ENCODE measurements at regions of chr13 and their contacts with region 1.

Region 1: GRCh38 chr13:51797664-51798488 is 6.1 kb downstream of the DHRS12 start:
- DNase-seq: no peak
- ATAC-seq: peak; percentile 67
- H3K4me3 ChIP-seq: no peak overlapping the region
- H3K27ac ChIP-seq: no peak overlapping the region
- H3K4me1 ChIP-seq: peaks cover 39% of the 10 kb centered on the region
- H3K27me3 ChIP-seq: no peaks in the 10 kb centered on the region
- CTCF ChIP-seq: peak; percentile 62 to 84 (median 69); a peak in 5 of 6 replicates
- EP300 ChIP-seq: no peak
- POLR2A ChIP-seq: no peak
- RAD21 ChIP-seq: peak; percentile 93

Region 2: DNA sequence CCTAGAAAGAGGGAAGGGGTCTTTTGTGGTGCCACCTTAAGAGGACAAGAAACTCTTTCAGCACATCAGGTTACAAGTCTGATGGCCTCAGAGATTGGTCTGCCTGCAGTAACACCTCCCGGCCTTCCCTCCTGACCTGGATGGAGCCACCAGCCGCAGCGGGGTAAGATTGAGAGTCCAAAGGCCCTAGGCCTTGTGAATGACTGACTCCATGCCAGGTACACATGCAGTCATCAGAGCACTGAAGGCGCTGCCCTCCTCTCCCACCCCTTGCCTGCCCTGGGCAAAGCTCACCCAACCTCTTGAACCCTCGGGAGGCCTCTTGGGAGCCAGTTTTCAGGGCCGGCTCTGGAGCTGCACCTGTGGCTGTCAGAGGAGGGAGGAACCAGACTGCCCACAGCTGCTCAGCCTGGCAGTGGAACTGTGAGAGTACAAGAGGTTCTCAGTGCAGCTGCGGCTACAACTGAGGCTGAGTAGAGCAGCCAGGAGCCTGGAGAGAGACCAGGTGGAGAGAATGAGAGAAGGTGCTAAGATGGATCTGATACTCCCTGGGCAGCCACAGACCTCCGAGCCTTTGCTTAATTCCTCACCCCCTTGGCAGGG is 663.0 kb before region 1 on chr13:
- CTCF ChIA-PET with region 1: interaction called, 12 read pairs
- POLR2A ChIA-PET with region 1: no interaction called
- RAD21 ChIA-PET with region 1: no interaction called
- SMC1A ChIA-PET with region 1: no interaction called
- in situ Hi-C with region 1: no loop called
- intact Hi-C with region 1: no loop called
- DNase-seq: no peak
- ATAC-seq: no peak
- H3K4me3 ChIP-seq: no peak overlapping the region
- H3K27ac ChIP-seq: no peak overlapping the region
- H3K4me1 ChIP-seq: no peaks in the 10 kb centered on the region
- H3K27me3 ChIP-seq: peaks cover 0 to 2% of the 10 kb centered on the region in 2 experiments; a peak in 2 of 4 replicates
- CTCF ChIP-seq: no peak
- EP300 ChIP-seq: no peak
- POLR2A ChIP-seq: no peak
- RAD21 ChIP-seq: no peak

Region 3: DNA sequence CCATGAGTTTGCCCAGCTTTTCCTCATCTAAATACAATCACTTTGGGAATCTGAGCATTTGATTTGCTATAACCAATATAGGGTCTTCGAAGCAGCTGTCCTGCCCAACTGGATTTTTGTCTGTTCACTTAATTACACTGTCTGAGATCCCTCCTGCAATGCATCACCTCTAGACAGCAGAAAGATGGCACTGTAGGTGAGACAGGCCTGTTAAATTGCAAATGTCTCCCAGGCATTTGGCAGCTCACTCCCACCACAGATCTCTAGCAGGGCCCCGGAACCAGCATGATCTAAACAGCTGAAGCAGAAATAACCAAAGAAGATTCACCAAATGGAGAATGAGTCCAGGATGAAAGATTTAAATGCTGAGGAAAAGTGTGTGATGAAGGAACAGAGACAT is 500.3 kb before region 1 on chr13:
- CTCF ChIA-PET with region 1: interaction called, 19 read pairs
- POLR2A ChIA-PET with region 1: no interaction called
- RAD21 ChIA-PET with region 1: interaction called, 19 read pairs
- SMC1A ChIA-PET with region 1: interaction called, 28 read pairs
- in situ Hi-C with region 1: no loop called
- intact Hi-C with region 1: no loop called
- DNase-seq: no peak
- ATAC-seq: peak; percentile 57; the same call in 2 of the 3 replicates
- H3K4me3 ChIP-seq: no peak overlapping the region
- H3K27ac ChIP-seq: no peak overlapping the region
- H3K4me1 ChIP-seq: no peaks in the 10 kb centered on the region
- H3K27me3 ChIP-seq: no peaks in the 10 kb centered on the region
- CTCF ChIP-seq: peak; percentile 7 to 24 (median 15); a peak in 1 of 6 replicates
- EP300 ChIP-seq: no peak
- POLR2A ChIP-seq: no peak
- RAD21 ChIP-seq: peak; percentile 41; the same call in 1 of the 2 replicates

Region 4: GRCh38 chr13:51420681-51421490 is 377.0 kb before region 1 on chr13:
- CTCF ChIA-PET with region 1: interaction called, 13 read pairs
- POLR2A ChIA-PET with region 1: interaction called, 3 read pairs
- RAD21 ChIA-PET with region 1: interaction called, 6 read pairs
- SMC1A ChIA-PET with region 1: interaction called, 9 read pairs
- in situ Hi-C with region 1: no loop called
- intact Hi-C with region 1: no loop called
- DNase-seq: no peak
- ATAC-seq: 0 out of 3 replicates have a peak, but pooled peaks have one; percentile 6
- H3K4me3 ChIP-seq: no peak overlapping the region
- H3K27ac ChIP-seq: peak overlapping the region; percentile 66
- H3K4me1 ChIP-seq: peaks cover 52% of the 10 kb centered on the region
- H3K27me3 ChIP-seq: no peaks in the 10 kb centered on the region
- CTCF ChIP-seq: no peak
- EP300 ChIP-seq: no peak
- POLR2A ChIP-seq: no peak
- RAD21 ChIP-seq: no peak

Region 5: GRCh38 chr13:51444922-51445321 is 353.0 kb before region 1 on chr13:
- CTCF ChIA-PET with region 1: interaction called, 35 read pairs
- POLR2A ChIA-PET with region 1: no interaction called
- RAD21 ChIA-PET with region 1: interaction called, 25 read pairs
- SMC1A ChIA-PET with region 1: interaction called, 55 read pairs
- in situ Hi-C with region 1: loop called (anchors 5 kb)
- intact Hi-C with region 1: no loop called
- DNase-seq: no peak
- ATAC-seq: no peak
- H3K4me3 ChIP-seq: no peak overlapping the region
- H3K27ac ChIP-seq: no peak overlapping the region
- H3K4me1 ChIP-seq: no peaks in the 10 kb centered on the region
- H3K27me3 ChIP-seq: no peaks in the 10 kb centered on the region
- CTCF ChIP-seq: no peak; a peak in 1 of 6 replicates
- EP300 ChIP-seq: no peak
- POLR2A ChIP-seq: no peak
- RAD21 ChIP-seq: peak; percentile 51; the same call in 1 of the 2 replicates

Region 6: DNA sequence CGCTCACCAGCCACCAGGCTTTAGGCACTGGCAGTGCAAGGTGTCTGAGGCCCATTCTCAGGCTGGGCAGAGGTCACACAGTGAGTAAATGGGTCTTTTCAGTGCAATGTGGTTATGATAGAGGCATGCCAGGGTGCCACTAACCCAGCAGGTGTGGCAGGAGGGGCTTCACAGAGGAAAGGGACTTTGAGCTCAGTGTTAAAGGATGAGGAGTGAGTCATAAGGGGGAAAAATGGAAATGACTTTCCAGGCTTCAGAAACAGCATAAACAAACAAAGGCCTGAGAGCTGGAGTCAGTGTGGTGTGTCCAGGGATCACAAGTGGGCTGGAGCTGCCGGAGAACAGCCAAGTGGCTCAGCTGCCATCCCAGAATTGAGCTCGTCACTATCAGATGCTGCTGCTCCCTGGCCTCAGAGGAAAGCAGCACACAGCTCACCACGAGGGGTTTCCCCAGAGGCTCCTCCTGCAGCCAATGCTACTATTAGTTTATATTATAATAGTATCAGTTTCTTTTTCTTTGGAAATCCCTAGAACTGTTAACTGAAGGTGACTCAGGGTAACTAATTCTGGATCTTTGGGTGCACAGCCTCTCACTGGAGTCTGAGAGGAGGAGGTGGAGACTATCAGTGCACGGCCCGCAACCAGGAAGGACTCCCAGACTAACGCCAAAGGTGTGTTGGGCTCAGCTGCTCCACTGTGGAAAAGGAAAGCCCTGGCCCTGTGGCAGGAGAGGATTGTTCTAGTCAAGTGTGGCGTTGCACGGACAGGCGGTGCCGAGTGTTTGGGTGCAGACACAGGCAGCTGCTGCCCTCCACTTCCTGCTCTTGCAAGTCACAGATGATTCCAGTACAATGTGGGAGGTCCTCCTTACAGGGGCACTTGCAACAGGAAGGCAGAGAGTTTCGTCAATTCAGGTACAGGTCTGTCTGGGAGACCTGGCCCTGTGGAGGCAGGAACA is 33.4 kb before region 1 on chr13:
- CTCF ChIA-PET with region 1: interaction called, 15 read pairs
- POLR2A ChIA-PET with region 1: interaction called, 7 read pairs
- RAD21 ChIA-PET with region 1: interaction called, 16 read pairs
- SMC1A ChIA-PET with region 1: interaction called, 24 read pairs
- in situ Hi-C with region 1: no loop called
- intact Hi-C with region 1: no loop called
- DNase-seq: peak; percentile 65
- ATAC-seq: peak; percentile 90
- H3K4me3 ChIP-seq: peak overlapping the region; percentile 49
- H3K27ac ChIP-seq: peak overlapping the region; percentile 87
- H3K4me1 ChIP-seq: peaks cover 21% of the 10 kb centered on the region
- H3K27me3 ChIP-seq: no peaks in the 10 kb centered on the region
- CTCF ChIP-seq: 0 out of 6 replicates have a peak, but pooled peaks of 1 of the 3 experiments have one; percentile 7
- EP300 ChIP-seq: no peak
- POLR2A ChIP-seq: peak; percentile 81
- RAD21 ChIP-seq: no peak

Region 7: GRCh38 chr13:51832471-51833152 is 34.7 kb after region 1 on chr13:
- CTCF ChIA-PET with region 1: interaction called, 21 read pairs
- POLR2A ChIA-PET with region 1: no interaction called
- RAD21 ChIA-PET with region 1: interaction called, 6 read pairs
- SMC1A ChIA-PET with region 1: interaction called, 8 read pairs
- in situ Hi-C with region 1: no loop called
- intact Hi-C with region 1: no loop called
- DNase-seq: no peak
- ATAC-seq: peak; percentile 97
- H3K4me3 ChIP-seq: no peak overlapping the region
- H3K27ac ChIP-seq: no peak overlapping the region
- H3K4me1 ChIP-seq: no peaks in the 10 kb centered on the region
- H3K27me3 ChIP-seq: peaks cover 0 to 6% of the 10 kb centered on the region in 2 experiments; a peak in 3 of 4 replicates
- CTCF ChIP-seq: peak; percentile 44 to 75 (median 56)
- EP300 ChIP-seq: no peak
- POLR2A ChIP-seq: no peak
- RAD21 ChIP-seq: peak; percentile 65

Region 8: DNA sequence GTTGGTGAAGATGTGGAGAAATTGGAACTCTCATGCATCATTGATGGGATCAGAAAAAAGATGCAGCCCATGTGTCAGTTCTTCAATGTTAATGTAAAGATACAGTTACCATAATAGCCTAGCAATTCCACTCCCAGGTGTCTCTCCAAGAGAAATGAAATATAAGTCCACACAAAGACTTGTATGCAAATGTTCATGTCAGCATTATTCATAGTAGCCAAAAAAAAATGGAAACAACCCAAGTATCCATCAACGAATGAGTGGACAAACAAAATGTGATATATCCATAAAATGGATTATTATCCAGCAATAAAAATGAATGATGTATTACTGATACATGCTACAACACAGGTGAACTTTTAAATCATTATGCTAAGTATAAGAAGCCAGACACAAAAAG is 102.6 kb after region 1 on chr13:
- CTCF ChIA-PET with region 1: no interaction called
- POLR2A ChIA-PET with region 1: no interaction called
- RAD21 ChIA-PET with region 1: no interaction called
- SMC1A ChIA-PET with region 1: no interaction called
- in situ Hi-C with region 1: no loop called
- intact Hi-C with region 1: no loop called
- DNase-seq: no peak
- ATAC-seq: no peak
- H3K4me3 ChIP-seq: no peak overlapping the region
- H3K27ac ChIP-seq: no peak overlapping the region
- H3K4me1 ChIP-seq: no peaks in the 10 kb centered on the region
- H3K27me3 ChIP-seq: peaks cover 1 to 4% of the 10 kb centered on the region in 2 experiments; a peak in 3 of 4 replicates
- CTCF ChIP-seq: no peak
- EP300 ChIP-seq: no peak
- POLR2A ChIP-seq: no peak
- RAD21 ChIP-seq: no peak

Measured in GM12878 (cell line).